ENCODE measurements at regions of chr15 and their contacts with region 1.

Region 1: GRCh38 chr15:45714590-45715488 is 80.0 kb downstream of the SQOR start:
- DNase-seq: no peak
- ATAC-seq: peak; percentile 72

Region 2: DNA sequence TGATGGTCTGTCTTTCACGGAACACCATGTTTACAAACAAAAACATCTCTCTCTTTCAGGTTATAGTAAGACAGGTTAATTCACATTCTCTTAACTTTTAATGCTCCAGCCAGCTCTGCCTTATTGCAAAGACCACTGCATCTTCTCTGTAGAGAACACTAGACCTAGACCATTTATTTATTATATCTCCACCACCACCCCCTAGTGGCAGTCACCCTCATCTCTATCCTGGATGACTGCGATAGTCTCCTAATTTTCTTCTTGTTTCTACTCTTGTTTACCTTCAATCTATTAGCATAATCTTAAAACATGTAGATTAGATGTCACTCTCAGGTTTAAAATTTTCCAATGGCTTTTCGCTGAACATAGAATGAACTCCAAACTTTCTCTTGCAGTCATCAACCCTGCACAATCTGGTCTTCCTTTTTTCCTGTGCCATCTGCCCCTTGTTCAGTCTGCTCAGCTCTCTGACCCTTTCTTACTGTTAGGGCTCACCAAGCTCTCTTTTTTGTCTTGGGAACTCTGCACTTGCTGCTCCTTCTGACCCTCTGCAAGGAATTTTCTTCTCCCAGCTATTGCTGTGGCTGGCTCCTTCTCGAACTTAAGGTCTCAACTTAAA is 75.6 kb after region 1 on chr15:
- intact Hi-C with region 1: loop called (anchors 1 kb)
- DNase-seq: no peak
- ATAC-seq: no peak

Region 3: DNA sequence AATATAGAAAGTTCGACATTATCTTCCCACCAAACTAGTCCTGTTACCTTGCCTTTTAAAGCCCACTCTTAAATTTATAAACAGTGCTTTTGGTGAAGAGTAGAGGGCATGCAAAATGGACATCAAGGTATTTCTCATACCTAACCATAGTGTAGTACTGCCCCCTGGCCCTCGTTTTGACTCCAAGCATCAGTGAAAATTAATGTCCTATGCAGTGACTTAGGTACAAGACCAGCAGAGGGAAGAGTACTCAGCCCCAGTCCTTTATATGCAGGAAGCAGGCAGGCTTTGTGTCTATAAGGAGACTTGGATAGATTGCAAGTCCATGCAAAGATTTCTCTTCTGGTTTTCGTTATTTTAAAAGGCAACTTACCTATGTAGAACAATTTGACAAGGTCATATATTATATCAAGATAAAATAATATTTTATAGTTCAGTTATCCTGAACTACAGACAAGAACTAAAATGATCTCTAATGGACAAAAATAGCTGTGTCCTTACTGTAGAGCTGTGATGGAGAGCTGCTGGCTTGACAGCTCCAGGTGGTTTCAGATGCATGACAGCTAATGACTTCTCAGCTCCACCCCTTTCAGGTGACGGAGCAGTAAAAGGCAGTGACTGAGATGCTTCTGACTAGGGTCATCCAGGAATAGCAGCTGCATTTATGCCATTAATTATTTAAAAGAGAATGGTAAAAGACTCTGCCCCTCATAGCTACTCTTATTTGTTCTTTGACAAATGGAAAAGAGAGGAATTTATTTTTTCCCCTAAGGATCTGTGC is 566.1 kb after region 1 on chr15:
- intact Hi-C with region 1: loop called (anchors 5 kb)
- DNase-seq: no peak
- ATAC-seq: no peak

Region 4: DNA sequence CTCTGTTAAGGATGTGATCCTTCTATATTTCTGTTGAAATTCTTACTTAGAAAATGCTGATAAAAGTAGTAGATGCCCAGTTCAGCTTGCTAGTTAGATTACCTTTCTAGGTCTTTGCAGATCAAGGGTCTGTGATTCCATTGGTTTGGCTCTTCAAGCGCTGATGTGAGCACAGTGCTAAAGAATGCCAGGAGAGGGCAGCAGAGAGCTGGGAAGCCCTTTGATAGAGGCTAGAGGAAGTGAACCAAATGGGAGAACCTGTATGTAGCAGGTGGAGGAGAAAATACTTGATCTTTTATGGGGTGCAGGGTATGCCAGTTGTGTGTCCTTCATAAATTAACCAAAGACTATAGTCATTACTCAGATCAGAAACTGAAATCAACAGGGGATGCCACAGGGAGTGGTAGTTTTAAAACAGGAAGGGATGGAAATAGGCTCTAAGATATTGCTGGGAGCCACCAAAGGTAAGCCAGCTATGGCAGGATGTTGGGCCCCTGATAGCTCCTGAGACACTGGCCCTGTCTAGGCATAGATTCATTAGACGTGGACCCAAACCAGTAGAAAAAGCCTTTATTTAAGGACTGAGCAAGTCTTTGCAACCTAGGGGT is 597.4 kb after region 1 on chr15:
- intact Hi-C with region 1: loop called (anchors 10 kb)
- DNase-seq: no peak
- ATAC-seq: peak; percentile 70

Measured in Right ventricle myocardium inferior (tissue), 1 donor.